CD14-positive monocyte (primary cell): ENCODE measurements at regions of chr7 and their contacts with region 1.

Region 1: GRCh38 chr7:129635300-129636029 is 23.9 kb downstream of the NRF1 start:
- DNase-seq: peak; percentile 43 to 65 (median 56)
- H3K4me3 ChIP-seq: no peak overlapping the region
- H3K4me3 Mint-ChIP-seq: no peak overlapping the region
- H3K27ac ChIP-seq: no peak overlapping the region
- H3K27ac Mint-ChIP-seq: peak overlapping the region in 1 of 7 donors; percentile 35
- H3K4me1 ChIP-seq: peaks cover under 1 to 1% of the 10 kb centered on the region in 2 donors
- H3K4me1 Mint-ChIP-seq: peaks cover 4% of the 10 kb centered on the region
- H3K27me3 ChIP-seq: no peaks in the 10 kb centered on the region
- H3K27me3 Mint-ChIP-seq: no peaks in the 10 kb centered on the region
- CTCF ChIP-seq: peak; percentile 83

Region 2: GRCh38 chr7:129591868-129592267 is 43.6 kb before region 1 on chr7:
- intact Hi-C with region 1: loop called in 1 of 2 experiments (anchors 5 kb)
- DNase-seq: no peak
- H3K4me3 ChIP-seq: no peak overlapping the region
- H3K4me3 Mint-ChIP-seq: no peak overlapping the region
- H3K27ac ChIP-seq: no peak overlapping the region
- H3K27ac Mint-ChIP-seq: no peak overlapping the region
- H3K4me1 ChIP-seq: peaks cover 5% of the 10 kb centered on the region in 2 donors
- H3K4me1 Mint-ChIP-seq: peaks cover 7% of the 10 kb centered on the region
- H3K27me3 ChIP-seq: no peaks in the 10 kb centered on the region
- H3K27me3 Mint-ChIP-seq: peaks cover 0 to 2% (median 0%) of the 10 kb centered on the region in 3 donors
- CTCF ChIP-seq: no peak

Region 3: GRCh38 chr7:129698516-129699418 is 63.3 kb after region 1 on chr7:
- intact Hi-C with region 1: no loop called
- DNase-seq: no peak
- H3K4me3 ChIP-seq: no peak overlapping the region
- H3K4me3 Mint-ChIP-seq: no peak overlapping the region
- H3K27ac ChIP-seq: no peak overlapping the region
- H3K27ac Mint-ChIP-seq: no peak overlapping the region
- H3K4me1 ChIP-seq: no peaks in the 10 kb centered on the region
- H3K4me1 Mint-ChIP-seq: no peaks in the 10 kb centered on the region
- H3K27me3 ChIP-seq: no peaks in the 10 kb centered on the region
- H3K27me3 Mint-ChIP-seq: no peaks in the 10 kb centered on the region
- CTCF ChIP-seq: no peak